Ascending aorta (tissue), 2 donors: ENCODE measurements at regions of chr20 and their contacts with region 1.

Region 1: DNA sequence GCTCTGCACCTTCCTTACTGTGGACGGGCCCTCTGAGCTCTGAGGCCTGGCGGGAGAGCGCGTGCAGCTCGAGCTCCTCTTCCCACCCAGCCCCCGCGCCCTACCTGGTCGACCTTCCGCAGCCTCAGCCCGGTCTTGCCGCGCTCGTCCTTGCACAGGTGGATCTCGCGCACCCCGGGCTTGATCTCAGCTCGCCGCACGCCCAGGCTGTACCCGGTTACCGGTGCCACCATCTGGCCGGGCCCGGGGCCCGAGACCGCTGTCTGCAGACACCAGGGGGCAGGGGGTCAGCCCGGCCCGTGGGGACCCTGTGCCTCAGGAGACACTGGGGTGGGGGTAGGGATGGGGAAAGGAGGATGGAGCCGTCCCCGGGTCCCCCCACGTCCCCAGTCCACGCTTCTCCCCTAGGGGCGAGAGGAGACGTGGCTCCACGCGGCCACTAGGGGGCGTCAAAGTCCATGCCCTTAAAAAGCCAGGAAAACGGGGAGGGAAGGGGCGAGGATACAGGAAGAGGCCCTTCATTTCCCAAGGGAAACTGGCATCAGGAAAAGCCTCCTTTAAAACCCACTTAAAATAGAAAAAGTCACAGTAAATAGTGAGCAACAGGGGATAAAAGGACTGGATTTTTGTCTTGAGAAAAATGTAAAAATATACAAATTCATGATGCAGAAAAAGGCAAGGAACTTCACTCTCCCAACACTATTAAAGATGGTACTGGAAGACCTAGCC is 15.5 kb downstream of the SDCBP2 start:
- DNase-seq: peak in 1 of 2 donors; percentile 89
- H3K4me3 ChIP-seq: peak overlapping the region; percentile 24 to 51
- H3K27ac ChIP-seq: no peak overlapping the region
- H3K4me1 ChIP-seq: peaks cover 0 to 3% of the 10 kb centered on the region in 2 donors
- H3K27me3 ChIP-seq: no peaks in the 10 kb centered on the region
- CTCF ChIP-seq: peak; percentile 92 to 99 (median 97)

Region 2: GRCh38 chr20:1392823-1393506 is 79.6 kb after region 1 on chr20 and contains the start of gene FKBP1A:
- intact Hi-C with region 1: loop called (anchors 1 kb)
- DNase-seq: peak; percentile 51 to 94
- H3K4me3 ChIP-seq: peak within 1 kb of the TSS; percentile 80 to 92
- H3K27ac ChIP-seq: peak within 1 kb of the TSS; percentile 84 to 86
- H3K4me1 ChIP-seq: peaks cover 13 to 41% of the 10 kb centered on the region in 2 donors
- H3K27me3 ChIP-seq: no peaks in the 10 kb centered on the region
- CTCF ChIP-seq: peak in 2 of 3 experiments; percentile 13 to 19
- total RNA-seq, gene FKBP1A: 202 TPM

Region 3: DNA sequence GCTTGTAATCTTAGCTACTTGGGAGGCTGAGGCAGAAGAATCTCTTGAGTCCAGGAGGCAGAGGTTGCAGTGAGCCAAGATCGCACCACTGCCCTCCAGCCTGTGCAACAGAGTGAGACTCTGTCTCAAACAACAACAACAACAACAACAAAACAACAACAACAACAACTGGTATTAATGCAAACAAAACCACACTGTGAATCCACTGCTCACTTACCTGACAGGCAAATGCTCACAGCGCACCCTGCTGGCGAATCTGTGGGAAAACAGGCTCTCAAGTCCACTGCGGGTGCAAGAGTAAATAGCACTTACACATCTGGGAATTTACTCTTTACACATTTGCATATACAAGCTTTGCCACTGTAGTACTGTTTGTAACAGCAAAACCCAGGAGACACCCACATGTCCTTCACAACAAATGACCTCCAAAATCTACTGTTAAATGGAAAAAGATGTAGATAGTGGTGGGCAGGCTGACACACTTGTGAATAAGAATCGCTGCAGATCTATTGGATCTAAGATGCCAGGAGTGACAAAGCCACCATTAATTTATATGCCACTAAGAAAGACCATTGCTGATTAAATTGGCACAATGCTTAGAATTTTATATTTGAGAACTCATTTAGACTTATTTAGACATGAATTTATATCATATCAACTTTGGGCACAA is 124.0 kb after region 1 on chr20:
- intact Hi-C with region 1: loop called (anchors 1 kb)
- DNase-seq: peak in 1 of 2 donors; percentile 75
- H3K4me3 ChIP-seq: no peak overlapping the region
- H3K27ac ChIP-seq: no peak overlapping the region
- H3K4me1 ChIP-seq: no peaks in the 10 kb centered on the region
- H3K27me3 ChIP-seq: no peaks in the 10 kb centered on the region
- CTCF ChIP-seq: peak; percentile 63 to 79 (median 67)